Posterior vena cava (tissue), 2 donors: ENCODE measurements at regions of chr10 and their contacts with region 1.

Region 1: DNA sequence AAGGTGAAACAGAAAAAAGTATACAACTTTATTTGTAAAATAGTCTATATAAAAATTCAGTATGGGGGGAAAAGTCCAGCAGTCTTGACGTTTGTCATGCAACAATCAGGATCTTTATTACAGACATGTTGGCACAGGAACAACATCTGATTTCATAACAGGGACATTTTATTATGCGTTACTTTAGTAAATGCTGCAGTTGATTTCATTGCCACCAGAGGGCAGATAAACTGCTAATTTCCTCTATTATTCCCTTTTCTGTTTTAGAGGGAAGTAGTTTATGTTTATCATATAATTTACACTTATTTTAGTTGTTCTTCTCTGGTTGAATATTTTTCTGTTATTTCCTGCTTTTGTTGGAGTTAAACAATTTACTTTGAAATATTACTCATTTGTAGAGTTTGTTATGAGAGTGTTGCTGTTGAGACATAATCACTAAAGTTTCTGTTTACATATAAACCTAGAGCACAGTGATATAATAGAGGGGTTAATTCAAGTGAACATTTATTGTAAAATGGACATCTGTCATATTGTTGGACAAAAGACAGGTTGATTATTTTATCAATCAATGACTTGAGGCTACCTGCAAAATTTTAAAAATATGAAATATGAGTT is 3.3 kb downstream of the PLXDC2 start:
- DNase-seq: no peak

Region 2: DNA sequence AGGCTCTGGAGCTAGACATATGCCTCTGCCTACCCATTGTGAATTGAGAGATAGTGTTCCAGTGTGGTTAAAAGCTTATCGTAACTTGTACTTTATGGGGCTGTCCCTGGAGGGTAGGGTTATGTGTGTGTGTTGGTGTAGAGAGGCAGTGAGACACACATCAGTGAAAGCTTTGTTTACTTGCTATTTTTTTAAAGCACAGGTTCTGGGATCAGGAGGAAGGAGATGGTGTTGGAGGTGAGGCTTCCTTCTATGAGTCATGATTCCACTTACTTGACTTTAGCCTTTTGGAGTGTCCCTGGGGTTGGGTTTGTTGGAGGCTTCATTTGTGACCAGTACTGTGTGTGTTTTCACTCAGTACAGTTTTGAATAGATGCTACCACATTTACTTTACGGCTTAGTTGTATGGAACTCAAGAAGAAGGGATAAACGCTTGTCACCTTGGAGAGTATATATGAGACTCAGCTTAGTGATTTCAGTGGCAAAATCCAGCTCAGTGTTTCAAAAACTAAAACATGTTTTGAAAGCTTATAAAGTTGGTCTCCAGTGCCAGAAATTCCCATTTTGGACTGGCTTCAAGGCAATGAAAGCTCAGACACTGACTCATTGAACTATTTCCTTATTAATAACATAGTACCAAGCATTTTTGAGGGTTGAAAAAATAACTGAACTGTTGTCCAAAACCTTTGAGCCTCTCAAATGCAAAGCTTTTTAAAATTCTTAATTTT is 102.9 kb after region 1 on chr10:
- intact Hi-C with region 1: loop called in 1 of 2 experiments (anchors 10 kb)
- DNase-seq: no peak

Region 3: DNA sequence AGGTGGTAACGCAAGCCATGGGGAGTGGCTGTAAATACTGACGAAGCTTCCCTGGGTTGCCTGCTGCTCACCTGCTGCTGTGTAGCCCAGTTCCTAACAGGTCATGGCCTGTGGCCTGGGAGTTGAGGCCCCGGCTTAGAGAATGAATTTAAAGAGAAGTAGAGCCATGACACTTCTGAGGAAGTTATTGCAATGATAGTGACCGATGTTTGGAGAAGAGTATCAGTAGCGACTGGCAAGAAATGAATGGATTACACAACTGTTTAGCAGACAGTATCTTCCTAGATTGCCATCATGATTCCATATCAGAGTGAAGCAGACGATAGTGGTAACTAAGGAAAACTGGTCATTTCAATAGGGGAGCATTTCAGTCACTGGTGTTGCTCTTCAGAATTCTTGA is 246.3 kb after region 1 on chr10:
- intact Hi-C with region 1: no loop called
- DNase-seq: no peak

Region 4: DNA sequence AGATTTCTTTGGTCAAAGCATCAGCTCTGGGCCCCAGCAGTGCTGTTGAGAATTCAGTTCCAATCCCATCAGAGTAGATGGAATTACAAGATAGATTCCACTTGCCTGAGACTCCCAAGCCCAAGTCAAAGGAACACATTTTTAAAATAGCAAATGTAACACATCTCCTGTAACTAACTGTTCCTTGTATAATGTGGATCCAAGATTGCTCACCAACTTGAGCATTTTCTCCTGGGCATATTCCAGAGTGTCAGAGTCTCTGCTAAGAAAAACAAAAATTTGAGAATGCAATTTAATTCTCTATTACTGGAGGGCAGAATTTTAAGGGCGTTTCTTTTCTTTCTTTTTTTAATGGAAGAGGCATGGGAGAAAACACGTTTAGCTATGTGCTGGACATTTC is 940.9 kb after region 1 on chr10:
- intact Hi-C with region 1: loop called in 1 of 2 experiments (anchors 5 kb)
- DNase-seq: no peak

Region 5: GRCh38 chr10:20776384-20777118 is 957.0 kb after region 1 on chr10:
- intact Hi-C with region 1: loop called in 1 of 2 experiments (anchors 10 kb)
- DNase-seq: no peak